ENCODE measurements at regions of chr11 and their contacts with region 1.

Region 1: DNA sequence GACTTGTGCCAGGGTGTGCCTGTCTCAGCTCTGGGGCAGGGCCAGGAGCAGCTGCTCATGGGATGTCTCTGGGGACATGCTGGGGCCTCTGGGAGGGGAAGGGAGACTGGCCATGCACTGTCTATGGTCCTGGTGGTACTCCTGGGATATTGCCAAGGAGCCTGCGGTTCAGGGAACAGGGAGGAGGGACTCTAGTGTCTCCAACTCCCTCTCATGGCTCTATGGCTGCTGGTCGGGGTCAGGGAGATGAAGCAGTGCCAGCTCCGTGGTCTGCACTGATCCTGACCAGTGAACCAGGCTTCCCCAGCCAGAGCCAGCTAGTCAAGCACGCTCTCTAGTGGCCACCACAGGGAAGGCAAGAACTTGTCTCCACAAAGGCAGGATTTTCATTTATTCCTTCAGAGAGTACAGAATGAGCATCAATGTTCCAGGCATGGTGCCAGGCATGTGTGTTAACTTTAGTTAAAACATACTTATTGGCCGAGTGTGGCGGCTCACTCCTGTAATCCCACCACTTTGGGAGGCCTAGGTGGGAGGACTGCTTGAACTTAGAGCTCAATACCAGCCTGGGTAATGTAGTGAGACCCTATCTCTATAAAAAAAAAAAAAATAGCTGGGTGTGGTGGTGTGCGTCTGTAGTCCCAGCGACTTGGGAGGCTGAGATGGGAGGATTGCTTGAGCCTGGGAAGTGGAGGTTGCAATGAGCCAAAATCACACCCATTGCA is 2.5 kb upstream of the BEST1 start:
- DNase-seq: peak; percentile 96

Region 2: DNA sequence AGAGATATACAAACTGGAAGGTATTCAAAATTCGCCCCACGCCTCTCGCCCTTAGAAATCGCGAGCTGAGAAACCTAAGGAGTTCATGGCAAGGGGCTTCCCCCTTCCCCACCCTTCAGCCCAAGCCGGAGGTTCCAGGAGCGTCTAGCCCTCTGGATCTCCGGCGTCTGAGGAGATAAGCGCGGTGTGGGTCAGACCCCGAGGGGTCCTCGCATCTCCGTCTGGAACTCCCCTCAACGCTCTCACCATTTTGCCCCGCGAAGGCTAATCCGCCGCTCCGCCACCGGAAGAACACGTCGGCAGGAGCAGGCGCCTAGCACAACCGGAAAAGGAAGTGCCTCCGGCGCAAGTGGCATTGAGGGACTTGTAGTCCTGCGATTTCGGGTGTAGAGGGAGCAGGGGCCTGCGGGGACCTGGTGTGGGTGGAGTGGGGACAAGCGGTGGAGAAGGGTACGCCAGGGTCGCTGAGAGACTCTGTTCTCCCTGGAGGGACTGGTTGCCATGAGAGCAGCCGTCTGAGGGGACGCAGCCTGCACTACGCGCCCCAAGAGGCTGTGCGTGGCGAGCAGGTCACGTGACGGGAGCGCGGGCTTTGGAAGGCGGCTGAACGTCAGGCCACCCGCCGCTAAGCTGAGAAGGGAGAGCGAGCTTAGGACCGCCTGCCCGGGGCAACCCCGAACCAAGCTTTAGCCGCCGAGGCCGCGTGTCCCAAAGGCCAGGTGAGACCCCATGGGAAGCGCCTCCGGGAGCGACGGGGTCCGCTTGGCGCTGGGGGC is 155.2 kb before region 1 on chr11 and contains the starts of genes FEN1 and TMEM258:
- intact Hi-C with region 1: loop called in 1 of 2 experiments (anchors 10 kb)
- DNase-seq: peak; percentile 97
- total RNA-seq, gene FEN1: 4.6 to 6.0 TPM
- total RNA-seq, gene TMEM258: 78.2 to 84.7 TPM

Region 3: DNA sequence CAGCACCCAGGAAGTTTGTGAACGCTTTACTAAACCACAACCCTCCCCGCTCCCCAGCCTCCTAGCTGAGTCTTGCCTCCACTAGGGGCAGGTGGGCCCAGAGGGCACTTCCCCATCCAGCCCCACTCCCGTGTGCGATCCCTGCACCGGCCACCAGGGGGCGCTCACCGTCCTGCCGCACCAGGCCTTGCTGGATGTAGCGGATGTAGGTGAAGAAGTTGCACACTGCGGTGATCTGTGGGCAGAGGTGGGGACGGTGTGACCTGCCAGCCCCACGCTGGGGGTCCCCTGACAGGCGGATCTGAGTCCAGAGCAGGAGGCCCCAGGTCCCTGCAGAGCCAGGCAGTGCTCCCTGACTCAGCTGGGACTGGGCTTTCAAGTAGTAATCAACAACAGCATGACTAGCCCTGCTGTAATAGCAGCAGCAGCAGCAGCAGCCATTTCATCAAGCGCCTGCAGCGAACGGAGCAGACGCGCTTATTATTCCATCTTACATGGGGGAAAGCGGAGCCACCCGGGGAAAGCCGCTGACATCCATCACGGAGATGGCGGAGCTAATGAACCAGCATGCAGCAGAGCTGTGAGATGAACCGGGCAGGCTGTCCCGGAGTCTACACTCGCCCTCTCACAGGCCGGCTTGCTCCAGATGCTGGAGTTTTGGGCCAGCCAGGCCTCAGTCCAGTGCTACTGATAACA is 48.4 kb before region 1 on chr11:
- intact Hi-C with region 1: loop called (anchors 2 to 5 kb)
- DNase-seq: peak; percentile 96

Region 4: GRCh38 chr11:62081378-62082291 is 134.0 kb after region 1 on chr11:
- intact Hi-C with region 1: loop called in 1 of 2 experiments (anchors 5 kb)
- DNase-seq: peak; percentile 92

Region 5: GRCh38 chr11:62419314-62419929 is 471.8 kb after region 1 on chr11:
- intact Hi-C with region 1: no loop called
- DNase-seq: no peak

Measured in posterior vena cava (tissue), 2 donors.